Sciatic nerve (tissue), 2 donors: ENCODE measurements at regions of chr14 and their contacts with region 1.

Region 1: DNA sequence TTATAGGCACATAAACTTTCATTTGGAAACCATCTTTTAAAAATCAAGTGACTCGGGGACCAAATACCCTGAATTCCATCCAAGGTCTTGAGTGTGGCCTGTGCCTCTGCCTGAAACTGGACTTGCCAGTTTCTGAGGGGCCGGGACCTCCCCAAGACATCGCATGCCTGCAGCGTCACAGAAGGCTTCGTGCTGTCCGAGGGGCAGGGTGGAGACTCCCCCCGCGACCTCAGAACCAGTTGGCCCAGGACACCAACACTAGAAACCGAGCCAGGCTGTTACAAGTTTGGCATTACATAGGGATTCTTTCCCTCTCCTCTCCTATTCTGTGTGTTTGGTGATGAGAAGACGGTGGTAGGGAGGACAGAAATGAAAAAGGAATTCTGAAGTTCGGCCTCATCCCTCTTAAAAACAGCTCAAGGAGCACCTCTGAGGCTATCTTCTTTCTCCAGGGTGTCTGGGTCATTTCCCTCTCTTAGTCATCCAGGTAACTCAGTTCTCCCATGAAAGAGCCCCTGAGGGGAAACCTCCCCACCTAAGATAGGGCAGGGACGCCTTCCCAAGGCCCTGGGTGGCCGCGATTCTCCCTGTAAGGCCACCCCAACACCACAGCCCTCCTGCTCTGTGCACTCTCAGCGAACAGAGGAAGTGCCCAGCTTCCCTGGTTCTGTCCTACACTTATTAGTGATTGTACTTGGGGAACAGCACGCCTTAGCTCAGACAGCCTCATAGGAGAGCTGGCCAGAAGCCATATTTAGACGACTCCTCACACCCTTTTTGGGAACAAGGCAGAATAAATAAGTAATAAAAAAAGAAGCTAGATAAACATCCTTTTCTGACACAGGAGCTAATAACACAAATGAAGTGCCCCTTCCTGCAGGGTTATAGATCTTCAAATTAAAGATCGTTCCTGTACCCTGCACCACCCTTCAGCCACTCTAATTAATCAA is 93.8 kb downstream of the BCL11B start:
- DNase-seq: no peak
- ATAC-seq: peak; percentile 84

Region 2: DNA sequence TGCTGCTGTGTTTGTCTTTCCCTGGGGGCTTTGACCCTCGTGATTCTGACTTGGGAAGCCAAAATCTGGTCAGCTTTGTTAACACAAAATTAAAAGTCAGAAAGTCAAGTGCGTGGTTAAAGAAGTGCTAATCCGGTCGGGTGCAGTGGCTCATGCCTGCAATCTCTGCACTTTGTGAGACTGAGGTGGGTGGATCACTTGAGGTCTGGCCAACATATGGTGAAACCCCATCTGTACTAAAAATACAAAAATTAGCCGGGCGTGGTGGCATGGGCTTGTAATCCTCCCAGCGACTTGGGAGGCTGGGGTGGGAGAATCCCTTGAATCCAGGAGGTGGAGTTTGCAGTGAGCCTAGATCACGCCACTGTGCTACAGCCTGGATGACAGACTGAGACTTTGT is 1536.3 kb before region 1 on chr14:
- intact Hi-C with region 1: no loop called
- DNase-seq: no peak
- ATAC-seq: peak; percentile 58

Region 3: GRCh38 chr14:97900196-97900854 is 1277.8 kb before region 1 on chr14:
- intact Hi-C with region 1: loop called (anchors 5 kb)
- DNase-seq: no peak
- ATAC-seq: no peak

Region 4: GRCh38 chr14:99137991-99138491 is 40.1 kb before region 1 on chr14:
- intact Hi-C with region 1: loop called (anchors 1 kb)
- DNase-seq: no peak
- ATAC-seq: no peak